ENCODE measurements at regions of chr3 and their contacts with region 1.

Region 1: GRCh38 chr3:118736107-118736506 is 298.5 kb downstream of the IGSF11 start:
- DNase-seq: no peak
- H3K4me3 ChIP-seq: no peak overlapping the region
- CTCF ChIP-seq: no peak

Region 2: DNA sequence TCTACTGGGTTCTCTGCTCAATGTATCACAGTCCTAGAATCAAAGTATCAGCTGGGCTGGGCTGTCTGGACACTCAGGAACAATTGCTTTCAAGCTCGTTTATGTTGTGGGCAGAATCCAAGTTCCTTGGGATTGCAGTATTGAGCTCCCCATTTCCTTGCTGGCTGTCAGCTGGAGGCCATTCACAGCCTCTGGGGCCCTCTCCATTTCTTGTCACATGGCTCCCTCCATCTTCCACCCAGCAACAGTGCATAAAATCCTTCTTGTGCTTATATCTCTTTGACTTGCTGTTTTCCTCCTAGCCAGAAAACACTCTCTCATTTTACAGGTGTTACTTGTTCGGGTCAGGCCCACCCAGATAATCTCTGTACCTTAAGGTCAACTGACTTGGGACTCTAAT is 64.9 kb before region 1 on chr3:
- in situ Hi-C with region 1: loop called (anchors 10 kb)
- DNase-seq: no peak
- H3K4me3 ChIP-seq: no peak overlapping the region
- CTCF ChIP-seq: no peak

Region 3: DNA sequence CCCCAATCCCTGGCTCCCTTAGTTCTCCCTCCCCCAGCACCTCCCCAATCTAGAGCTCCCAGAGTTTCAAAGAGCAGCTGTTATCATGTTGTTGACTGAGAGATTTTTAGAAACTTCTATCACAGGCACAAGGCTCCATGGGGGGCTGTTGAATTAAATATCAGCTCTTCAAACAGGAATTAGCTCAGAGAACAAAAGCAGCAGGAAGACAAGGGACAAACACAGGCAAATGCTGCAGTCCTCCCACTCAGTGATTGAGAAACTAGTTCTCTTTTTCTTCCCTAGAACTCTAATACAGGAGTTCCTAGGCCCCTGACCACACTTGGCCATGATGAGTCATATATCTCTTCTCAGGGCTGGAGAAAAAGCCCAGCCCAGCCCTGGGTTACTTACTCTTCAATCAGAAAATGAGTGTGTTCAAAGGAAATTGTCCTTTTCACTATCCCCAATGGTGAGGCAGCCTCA is 36.5 kb after region 1 on chr3:
- in situ Hi-C with region 1: no loop called
- DNase-seq: no peak
- H3K4me3 ChIP-seq: no peak overlapping the region
- CTCF ChIP-seq: no peak

Region 4: GRCh38 chr3:118828351-118828750 is 92.2 kb after region 1 on chr3:
- in situ Hi-C with region 1: no loop called
- DNase-seq: no peak
- H3K4me3 ChIP-seq: no peak overlapping the region
- CTCF ChIP-seq: no peak